ENCODE measurements at regions of chr4 and their contacts with region 1.

Region 1: GRCh38 chr4:155944516-155944915 is 9.2 kb downstream of the CTSO start:
- DNase-seq: no peak
- H3K4me3 ChIP-seq: no peak overlapping the region
- H3K4me3 Mint-ChIP-seq: no peak overlapping the region
- H3K27ac Mint-ChIP-seq: no peak overlapping the region
- H3K4me1 ChIP-seq: peaks cover 31% of the 10 kb centered on the region
- H3K4me1 Mint-ChIP-seq: peaks cover 13% of the 10 kb centered on the region
- H3K27me3 ChIP-seq: no peaks in the 10 kb centered on the region
- H3K27me3 Mint-ChIP-seq: no peaks in the 10 kb centered on the region
- CTCF ChIP-seq: no peak

Region 2: GRCh38 chr4:155900381-155900780 is 44.1 kb before region 1 on chr4:
- CTCF ChIA-PET with region 1: no interaction called
- POLR2A ChIA-PET with region 1: no interaction called
- intact Hi-C with region 1: loop called (anchors 5 kb)
- DNase-seq: no peak
- H3K4me3 ChIP-seq: no peak overlapping the region
- H3K4me3 Mint-ChIP-seq: no peak overlapping the region
- H3K27ac Mint-ChIP-seq: no peak overlapping the region
- H3K4me1 ChIP-seq: peaks cover 34% of the 10 kb centered on the region
- H3K4me1 Mint-ChIP-seq: peaks cover 14% of the 10 kb centered on the region
- H3K27me3 ChIP-seq: no peaks in the 10 kb centered on the region
- H3K27me3 Mint-ChIP-seq: no peaks in the 10 kb centered on the region
- CTCF ChIP-seq: no peak